Endothelial cell of umbilical vein (primary cell): ENCODE measurements at regions of chr13 and their contacts with region 1.

Region 1: GRCh38 chr13:110340812-110341444 is 33.8 kb downstream of the COL4A2 start:
- DNase-seq: peak; percentile 80
- H3K4me3 ChIP-seq: peak overlapping the region in 1 of 3 experiments; percentile 31
- H3K27ac ChIP-seq: peak overlapping the region; percentile 100
- H3K4me1 ChIP-seq: peaks cover 62% of the 10 kb centered on the region
- H3K27me3 ChIP-seq: no peaks in the 10 kb centered on the region
- CTCF ChIP-seq: no peak
- POLR2A ChIP-seq: peak; percentile 18

Region 2: GRCh38 chr13:110197046-110197445 is 143.9 kb before region 1 on chr13:
- CTCF ChIA-PET with region 1: no interaction called
- POLR2A ChIA-PET with region 1: no interaction called
- dilution Hi-C with region 1: no loop called
- intact Hi-C with region 1: no loop called
- DNase-seq: no peak
- H3K4me3 ChIP-seq: no peak overlapping the region
- H3K27ac ChIP-seq: no peak overlapping the region
- H3K4me1 ChIP-seq: no peaks in the 10 kb centered on the region
- H3K27me3 ChIP-seq: no peaks in the 10 kb centered on the region
- CTCF ChIP-seq: no peak
- POLR2A ChIP-seq: no peak

Region 3: GRCh38 chr13:110250258-110250891 is 90.6 kb before region 1 on chr13:
- CTCF ChIA-PET with region 1: interaction called, 13 read pairs
- POLR2A ChIA-PET with region 1: no interaction called
- dilution Hi-C with region 1: no loop called
- intact Hi-C with region 1: no loop called
- DNase-seq: peak; percentile 64
- H3K4me3 ChIP-seq: no peak overlapping the region
- H3K27ac ChIP-seq: peak overlapping the region; percentile 77
- H3K4me1 ChIP-seq: peaks cover 38% of the 10 kb centered on the region
- H3K27me3 ChIP-seq: no peaks in the 10 kb centered on the region
- CTCF ChIP-seq: no peak
- POLR2A ChIP-seq: no peak

Region 4: DNA sequence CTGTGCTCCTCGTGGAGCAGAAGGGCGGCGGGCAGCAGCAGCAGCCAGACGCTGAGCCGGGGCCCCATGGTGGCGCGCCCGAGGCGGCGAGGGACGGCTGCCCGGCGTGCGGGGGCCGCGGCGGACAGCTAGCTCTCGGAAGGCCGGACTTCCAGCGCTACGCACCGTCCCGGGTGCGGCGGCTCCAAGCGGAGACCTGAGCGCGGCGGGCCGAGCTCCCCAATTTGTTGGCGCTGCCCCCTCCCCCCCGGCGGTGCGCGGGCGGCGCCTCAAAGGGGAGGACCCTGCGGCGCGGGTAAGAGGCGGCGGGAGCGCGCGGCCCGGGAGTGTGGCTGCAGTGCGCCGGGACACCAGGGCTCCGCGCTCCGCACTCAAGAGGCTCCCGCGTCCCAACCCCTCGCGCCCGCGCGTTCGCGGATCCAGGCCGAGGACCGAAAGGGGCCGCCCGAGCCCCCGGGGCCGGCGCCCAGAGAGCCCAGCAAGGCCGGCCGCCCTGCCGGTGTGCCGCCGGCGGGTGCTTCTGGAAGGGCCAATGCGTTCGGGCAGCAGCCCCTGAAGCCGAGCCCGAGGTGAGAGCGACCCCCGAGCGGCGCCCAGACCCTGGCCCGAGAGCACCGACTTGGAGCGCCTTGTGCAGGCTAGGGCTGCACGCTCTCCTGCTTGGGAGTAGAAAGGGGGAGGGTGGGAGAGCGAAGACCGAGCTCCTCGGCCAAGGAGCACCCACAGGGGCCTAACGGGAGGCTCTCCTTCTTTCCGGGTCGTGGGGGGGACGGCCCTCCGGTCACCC is 33.8 kb before region 1 on chr13 and contains the starts of genes COL4A1 and COL4A2:
- CTCF ChIA-PET with region 1: interaction called, 7 read pairs
- POLR2A ChIA-PET with region 1: no interaction called
- dilution Hi-C with region 1: no loop called
- intact Hi-C with region 1: loop called (anchors 1 kb)
- DNase-seq: peak; percentile 66
- H3K4me3 ChIP-seq: peak within 1 kb of the TSS; percentile 64 to 83 (median 71)
- H3K27ac ChIP-seq: peak within 1 kb of the TSS; percentile 59
- H3K4me1 ChIP-seq: peaks cover 69% of the 10 kb centered on the region
- H3K27me3 ChIP-seq: no peaks in the 10 kb centered on the region
- CTCF ChIP-seq: no peak
- POLR2A ChIP-seq: peak; percentile 92
- total RNA-seq, gene COL4A1: 1,119 and 1,341 TPM in 2 replicates
- total RNA-seq, gene COL4A2: 792 and 935 TPM in 2 replicates

Region 5: GRCh38 chr13:110371550-110372465 is 30.9 kb after region 1 on chr13:
- CTCF ChIA-PET with region 1: no interaction called
- POLR2A ChIA-PET with region 1: no interaction called
- dilution Hi-C with region 1: no loop called
- intact Hi-C with region 1: loop called (anchors 1 kb)
- DNase-seq: peak; percentile 81
- H3K4me3 ChIP-seq: no peak overlapping the region
- H3K27ac ChIP-seq: peak overlapping the region; percentile 72
- H3K4me1 ChIP-seq: peaks cover 45% of the 10 kb centered on the region
- H3K27me3 ChIP-seq: no peaks in the 10 kb centered on the region
- CTCF ChIP-seq: no peak
- POLR2A ChIP-seq: no peak

Region 6: GRCh38 chr13:110419391-110419791 is 78.5 kb after region 1 on chr13:
- CTCF ChIA-PET with region 1: no interaction called
- POLR2A ChIA-PET with region 1: no interaction called
- dilution Hi-C with region 1: no loop called
- intact Hi-C with region 1: loop called (anchors 1 kb)
- DNase-seq: no peak
- H3K4me3 ChIP-seq: no peak overlapping the region
- H3K27ac ChIP-seq: peak overlapping the region; percentile 72
- H3K4me1 ChIP-seq: peaks cover 62% of the 10 kb centered on the region
- H3K27me3 ChIP-seq: no peaks in the 10 kb centered on the region
- CTCF ChIP-seq: no peak
- POLR2A ChIP-seq: no peak

Region 7: DNA sequence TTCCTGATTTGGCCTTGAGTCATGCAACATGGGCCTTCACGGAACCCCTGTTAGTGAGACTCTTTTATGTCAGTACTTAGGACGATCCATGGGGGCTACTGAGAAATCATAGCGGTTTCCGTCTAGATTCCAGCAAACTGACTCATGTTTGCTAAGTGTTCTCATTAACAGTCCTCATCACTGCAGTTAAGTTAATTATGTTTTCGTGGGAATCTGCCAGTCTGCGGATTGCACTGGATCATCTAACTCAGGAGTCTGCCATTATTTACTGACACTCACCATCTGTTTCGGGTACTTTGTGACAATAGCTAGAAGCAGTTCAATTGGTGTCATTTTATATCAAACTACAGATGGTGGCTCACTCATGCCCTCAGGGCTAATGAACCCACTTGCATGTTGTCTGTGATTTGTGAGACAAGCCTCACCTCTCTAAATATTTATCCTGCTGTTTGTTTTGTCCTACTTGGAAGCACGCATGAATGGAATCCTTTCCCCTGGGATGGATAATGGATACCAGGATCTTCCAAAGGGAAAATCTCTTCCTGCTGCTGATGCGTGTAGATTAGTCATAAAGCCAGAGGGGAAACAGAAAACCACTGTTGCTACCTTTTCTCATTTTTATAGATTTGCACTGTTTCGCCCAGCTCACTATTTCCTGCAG is 158.8 kb after region 1 on chr13:
- CTCF ChIA-PET with region 1: no interaction called
- POLR2A ChIA-PET with region 1: no interaction called
- dilution Hi-C with region 1: no loop called
- intact Hi-C with region 1: no loop called
- DNase-seq: no peak
- H3K4me3 ChIP-seq: no peak overlapping the region
- H3K27ac ChIP-seq: no peak overlapping the region
- H3K4me1 ChIP-seq: peaks cover 4% of the 10 kb centered on the region
- H3K27me3 ChIP-seq: no peaks in the 10 kb centered on the region
- CTCF ChIP-seq: no peak
- POLR2A ChIP-seq: no peak

Region 8: GRCh38 chr13:110715395-110716235 is 374.7 kb after region 1 on chr13:
- CTCF ChIA-PET with region 1: no interaction called
- POLR2A ChIA-PET with region 1: no interaction called
- dilution Hi-C with region 1: no loop called
- intact Hi-C with region 1: loop called (anchors 10 kb)
- DNase-seq: peak; percentile 100
- H3K4me3 ChIP-seq: peak overlapping the region; percentile 85 to 89 (median 87)
- H3K27ac ChIP-seq: peak overlapping the region; percentile 45
- H3K4me1 ChIP-seq: peaks cover 18% of the 10 kb centered on the region
- H3K27me3 ChIP-seq: no peaks in the 10 kb centered on the region
- CTCF ChIP-seq: peak in 1 of 2 donors; percentile 12
- POLR2A ChIP-seq: no peak